Sigmoid colon (tissue), 7 donors: ENCODE measurements at regions of chr4 and their contacts with region 1.

Region 1: DNA sequence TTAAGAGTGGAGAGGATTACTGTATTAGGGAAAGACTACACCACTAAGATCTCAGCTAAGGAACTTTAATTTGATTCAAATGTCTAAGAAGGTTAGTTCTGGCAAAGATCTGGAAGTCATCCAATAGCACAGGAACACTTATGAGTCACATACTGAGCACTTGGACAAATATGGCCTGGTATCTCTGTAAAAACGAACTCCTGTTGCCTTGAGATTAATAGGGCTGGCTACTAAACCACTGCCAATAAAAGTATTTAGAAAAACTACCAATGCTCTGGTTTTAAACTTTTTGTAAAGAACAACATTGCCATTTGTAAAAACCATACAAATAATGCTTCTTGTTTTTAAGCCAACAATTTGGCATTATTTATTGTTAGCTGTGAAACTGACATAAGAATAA is 70.5 kb downstream of the SEC24D start:
- DNase-seq: no peak
- H3K4me3 ChIP-seq: no peak overlapping the region
- H3K27ac ChIP-seq: peak overlapping the region; percentile 83 to 88 (median 85)
- H3K4me1 ChIP-seq: peaks cover 0 to 85% (median 79%) of the 10 kb centered on the region in 4 donors
- H3K27me3 ChIP-seq: no peaks in the 10 kb centered on the region
- CTCF ChIP-seq: no peak
- EP300 ChIP-seq: peak in 2 of 4 donors; percentile 59 to 89
- POLR2A ChIP-seq: no peak

Region 2: DNA sequence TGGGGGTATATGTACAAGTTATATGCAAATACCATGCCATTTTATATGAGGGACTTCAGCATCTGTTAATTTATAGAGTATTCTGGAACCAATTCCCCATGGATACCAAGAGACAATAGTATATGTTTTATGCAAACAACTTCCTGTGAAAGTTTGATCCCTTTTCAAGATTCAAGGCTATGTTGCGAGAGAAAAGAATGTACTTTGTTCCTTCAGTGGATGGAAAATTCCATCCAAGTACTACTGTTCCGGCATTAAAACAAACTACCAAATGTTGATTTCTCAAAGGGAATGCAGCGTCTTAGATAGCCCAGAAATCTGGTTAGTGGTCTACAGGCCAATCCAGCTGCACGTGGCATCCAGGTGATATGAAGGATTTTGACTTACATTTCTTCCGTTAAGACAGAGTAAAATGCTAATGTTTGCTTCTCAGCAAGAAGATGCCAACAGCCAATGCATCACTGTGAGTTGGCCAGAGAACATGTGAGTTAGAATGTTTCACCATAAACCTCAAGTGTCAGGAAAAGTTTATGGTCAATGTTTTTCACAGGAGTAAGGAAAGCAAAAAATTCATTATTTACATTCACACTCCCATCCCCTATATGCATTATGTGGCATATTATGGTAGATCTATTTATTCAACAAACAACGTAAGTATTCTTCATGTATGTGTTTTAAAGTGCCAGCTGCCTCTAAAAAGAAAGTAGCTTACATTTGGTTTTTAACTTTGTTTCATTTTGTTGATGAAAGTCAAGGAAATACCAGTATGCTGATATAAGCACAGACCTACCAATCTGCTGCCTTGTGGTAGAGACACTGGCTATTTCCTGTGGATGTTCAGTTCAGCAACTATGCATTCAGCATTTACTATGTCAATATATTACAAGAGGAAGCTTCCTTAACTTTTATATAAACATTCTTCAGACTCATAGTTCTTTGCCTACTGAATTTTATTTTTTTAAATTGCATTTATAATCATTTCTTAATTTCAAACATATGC is 35.8 kb before region 1 on chr4:
- intact Hi-C with region 1: no loop called
- DNase-seq: no peak
- H3K4me3 ChIP-seq: no peak overlapping the region
- H3K27ac ChIP-seq: no peak overlapping the region
- H3K4me1 ChIP-seq: no peaks in the 10 kb centered on the region
- H3K27me3 ChIP-seq: no peaks in the 10 kb centered on the region
- CTCF ChIP-seq: no peak
- EP300 ChIP-seq: no peak
- POLR2A ChIP-seq: no peak

Region 3: GRCh38 chr4:119000400-119000799 is 235.0 kb after region 1 on chr4:
- intact Hi-C with region 1: no loop called
- DNase-seq: peak; percentile 75
- H3K4me3 ChIP-seq: no peak overlapping the region
- H3K27ac ChIP-seq: peak overlapping the region; percentile 84 to 90 (median 87)
- H3K4me1 ChIP-seq: peaks cover 0 to 73% (median 62%) of the 10 kb centered on the region in 4 donors
- H3K27me3 ChIP-seq: no peaks in the 10 kb centered on the region
- CTCF ChIP-seq: no peak
- EP300 ChIP-seq: peak in 3 of 4 donors; percentile 27 to 70 (median 61)
- POLR2A ChIP-seq: no peak

Region 4: GRCh38 chr4:119025916-119026661 is 260.7 kb after region 1 on chr4:
- intact Hi-C with region 1: loop called (anchors 5 kb)
- DNase-seq: peak; percentile 89
- H3K4me3 ChIP-seq: peak overlapping the region; percentile 39 to 55 (median 50)
- H3K27ac ChIP-seq: peak overlapping the region; percentile 84 to 98 (median 94)
- H3K4me1 ChIP-seq: peaks cover 0 to 38% (median 24%) of the 10 kb centered on the region in 4 donors
- H3K27me3 ChIP-seq: no peaks in the 10 kb centered on the region
- CTCF ChIP-seq: no peak
- EP300 ChIP-seq: peak; percentile 84 to 98 (median 90)
- POLR2A ChIP-seq: peak in 1 of 2 donors; percentile 29

Region 5: GRCh38 chr4:119041951-119042560 is 276.7 kb after region 1 on chr4:
- intact Hi-C with region 1: loop called (anchors 5 kb)
- DNase-seq: peak; percentile 79
- H3K4me3 ChIP-seq: no peak overlapping the region
- H3K27ac ChIP-seq: peak overlapping the region; percentile 18 to 98 (median 89)
- H3K4me1 ChIP-seq: peaks cover 0 to 86% (median 60%) of the 10 kb centered on the region in 4 donors
- H3K27me3 ChIP-seq: no peaks in the 10 kb centered on the region
- CTCF ChIP-seq: peak; percentile 34 to 72 (median 70)
- EP300 ChIP-seq: no peak
- POLR2A ChIP-seq: no peak